A673 (cell line): ENCODE measurements at regions of chr9 and their contacts with region 1.

Region 1: GRCh38 chr9:137339045-137339907 is 37.2 kb upstream of the NRARP start:
- DNase-seq: no peak
- H3K4me3 ChIP-seq: no peak overlapping the region
- H3K27ac ChIP-seq: no peak overlapping the region
- H3K4me1 ChIP-seq: no peaks in the 10 kb centered on the region
- H3K27me3 ChIP-seq: no peaks in the 10 kb centered on the region
- CTCF ChIP-seq: no peak

Region 2: GRCh38 chr9:137240861-137241489 is 98.3 kb before region 1 on chr9 and contains the start of gene TUBB4B:
- CTCF ChIA-PET with region 1: no interaction called
- POLR2A ChIA-PET with region 1: no interaction called
- intact Hi-C with region 1: no loop called
- DNase-seq: peak; percentile 100
- H3K4me3 ChIP-seq: peak within 1 kb of the TSS; percentile 97
- H3K27ac ChIP-seq: peak within 1 kb of the TSS; percentile 98
- H3K4me1 ChIP-seq: peaks cover 44% of the 10 kb centered on the region
- H3K27me3 ChIP-seq: no peaks in the 10 kb centered on the region
- CTCF ChIP-seq: no peak
- total RNA-seq, gene TUBB4B: 645 and 714 TPM in 2 replicates

Region 3: DNA sequence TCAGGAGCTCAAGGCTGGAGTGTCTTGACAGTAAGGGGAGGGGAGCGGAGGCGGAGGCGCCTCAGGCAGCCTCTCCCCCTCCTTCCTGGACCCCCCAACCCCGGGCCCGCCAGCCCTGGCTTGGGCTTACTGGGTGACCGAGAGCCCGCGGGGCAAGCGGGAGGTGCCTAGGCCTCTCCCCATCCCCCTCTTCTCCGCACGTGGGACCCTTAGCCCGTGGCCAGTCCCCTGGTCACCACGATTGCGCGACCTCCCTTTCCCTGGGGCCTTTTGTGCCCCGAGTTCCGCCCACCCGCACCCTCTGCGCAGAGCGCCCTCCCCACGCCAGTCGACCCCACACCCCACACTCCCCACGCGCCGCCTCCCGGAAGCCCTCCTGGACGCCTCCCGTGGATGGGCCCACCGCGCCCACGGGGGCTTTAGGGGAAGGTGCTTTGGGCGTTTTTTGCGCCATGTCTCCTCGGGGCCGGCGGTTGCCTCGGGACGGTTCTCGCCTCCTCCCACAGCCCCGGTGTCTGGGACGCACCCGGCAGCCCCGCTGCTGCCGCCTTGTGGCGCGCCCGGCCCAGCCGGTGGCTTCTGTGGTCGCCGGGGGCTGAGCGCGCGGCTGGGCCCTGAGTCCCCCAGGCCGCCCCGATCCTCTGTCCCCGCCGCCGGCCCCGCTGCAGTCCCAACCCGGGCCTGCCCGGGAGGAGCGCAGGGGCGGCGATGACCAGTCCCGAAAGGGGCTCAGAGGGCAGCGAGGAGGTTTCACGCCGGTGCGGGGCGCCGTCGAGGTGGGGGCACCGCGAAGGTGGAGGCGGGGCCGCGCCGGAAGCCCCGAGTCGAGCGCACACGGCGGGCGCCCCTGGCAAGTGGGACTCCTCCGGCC is 58.6 kb before region 1 on chr9:
- CTCF ChIA-PET with region 1: no interaction called
- POLR2A ChIA-PET with region 1: interaction called, 13 read pairs
- intact Hi-C with region 1: no loop called
- DNase-seq: peak; percentile 71
- H3K4me3 ChIP-seq: peak overlapping the region; percentile 41
- H3K27ac ChIP-seq: no peak overlapping the region
- H3K4me1 ChIP-seq: peaks cover 23% of the 10 kb centered on the region
- H3K27me3 ChIP-seq: no peaks in the 10 kb centered on the region
- CTCF ChIP-seq: peak; percentile 68

Region 4: GRCh38 chr9:137648396-137648795 is 309.1 kb after region 1 on chr9:
- CTCF ChIA-PET with region 1: no interaction called
- POLR2A ChIA-PET with region 1: no interaction called
- intact Hi-C with region 1: no loop called
- DNase-seq: no peak
- H3K4me3 ChIP-seq: no peak overlapping the region
- H3K27ac ChIP-seq: no peak overlapping the region
- H3K4me1 ChIP-seq: no peaks in the 10 kb centered on the region
- H3K27me3 ChIP-seq: no peaks in the 10 kb centered on the region
- CTCF ChIP-seq: no peak